Common myeloid progenitor, CD34-positive (primary cell): ENCODE measurements at regions of chr3 and their contacts with region 1.

Region 1: GRCh38 chr3:149812606-149813366 is at the start of gene RNF13:
- DNase-seq: peak; percentile 95 to 96 (median 95)
- H3K4me3 ChIP-seq: peak within 1 kb of the TSS; percentile 84 to 99 (median 96)
- H3K27ac ChIP-seq: peak within 1 kb of the TSS; percentile 80 to 88
- H3K4me1 ChIP-seq: peaks cover 19 to 50% (median 32%) of the 10 kb centered on the region in 4 experiments
- H3K27me3 ChIP-seq: no peaks in the 10 kb centered on the region

Region 2: DNA sequence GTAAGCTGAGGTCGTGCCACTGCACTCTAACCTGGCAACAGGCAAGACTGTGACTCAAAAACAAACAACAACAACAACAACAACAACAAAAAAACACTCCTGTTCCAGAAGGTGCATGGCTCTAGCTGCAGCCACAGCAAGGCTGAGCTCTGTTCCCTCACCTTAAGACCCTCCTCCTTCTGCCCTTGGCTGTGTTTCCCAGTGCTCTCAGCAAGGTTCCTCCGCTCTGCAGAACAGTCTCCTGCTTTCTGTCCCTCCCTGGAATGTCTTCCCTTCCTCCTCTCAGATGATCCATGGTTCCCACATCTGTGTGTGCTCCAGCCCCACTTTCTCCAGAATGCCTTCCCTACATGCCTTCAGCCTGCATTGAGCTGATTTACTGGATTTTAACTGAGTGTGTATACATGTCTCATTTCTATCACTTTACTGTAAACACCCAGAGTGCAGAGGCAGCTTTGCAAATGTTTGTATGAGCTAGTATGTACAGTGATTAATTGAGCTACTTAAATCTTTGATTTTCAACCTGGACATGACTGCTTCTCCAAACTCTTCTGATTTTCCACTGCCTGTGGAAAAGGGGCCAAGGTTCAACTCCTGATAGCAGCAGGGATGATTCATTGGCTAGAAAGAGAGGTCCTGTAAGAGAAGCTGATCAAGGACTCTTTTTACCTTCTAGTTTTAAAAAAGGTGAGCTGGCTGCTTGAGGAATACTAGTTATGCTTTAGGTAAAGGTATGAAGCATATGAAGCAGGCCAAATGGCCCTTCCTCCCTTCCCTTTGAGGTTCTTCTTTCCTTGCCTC is 35.2 kb before region 1 on chr3:
- CTCF ChIA-PET with region 1: interaction called, 125 read pairs
- POLR2A ChIA-PET with region 1: no interaction called
- DNase-seq: no peak
- H3K4me3 ChIP-seq: no peak overlapping the region
- H3K27ac ChIP-seq: no peak overlapping the region
- H3K4me1 ChIP-seq: peaks cover 10 to 23% (median 14%) of the 10 kb centered on the region in 4 experiments
- H3K27me3 ChIP-seq: no peaks in the 10 kb centered on the region